Panc1 (cell line): ENCODE measurements at regions of chr11 and their contacts with region 1.

Region 1: GRCh38 chr11:68617925-68618809 is 66.2 kb upstream of the GAL start:
- DNase-seq: no peak
- ATAC-seq: peak; percentile 43; the same call in 1 of the 2 replicates
- H3K4me3 ChIP-seq: no peak overlapping the region
- H3K27ac ChIP-seq: no peak overlapping the region
- H3K4me1 ChIP-seq: no peaks in the 10 kb centered on the region
- H3K27me3 ChIP-seq: no peaks in the 10 kb centered on the region
- CTCF ChIP-seq: no peak

Region 2: DNA sequence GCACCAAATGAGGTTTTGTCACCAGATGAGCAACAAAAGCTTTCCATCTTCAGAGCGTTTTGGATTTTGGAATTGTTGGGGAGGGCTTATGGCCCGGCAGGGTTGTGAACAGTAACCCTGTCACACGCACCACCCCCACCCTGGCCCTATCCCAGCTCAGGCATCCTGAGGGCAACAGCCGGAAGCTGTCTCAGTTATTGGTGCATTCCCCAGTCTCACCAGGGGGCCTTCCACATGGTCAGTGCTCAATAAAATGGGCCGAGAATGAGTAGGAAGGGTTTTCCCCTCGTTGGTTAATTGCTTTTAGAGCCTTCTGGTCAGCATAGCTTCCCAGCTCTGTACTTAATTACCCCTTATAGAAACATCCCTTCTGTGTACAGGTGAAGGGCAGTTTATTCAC is 259.8 kb before region 1 on chr11:
- CTCF ChIA-PET with region 1: interaction called, 12 read pairs
- POLR2A ChIA-PET with region 1: no interaction called
- in situ Hi-C with region 1: no loop called
- intact Hi-C with region 1: no loop called
- DNase-seq: no peak
- ATAC-seq: no peak
- H3K4me3 ChIP-seq: no peak overlapping the region
- H3K27ac ChIP-seq: no peak overlapping the region
- H3K4me1 ChIP-seq: peaks cover 25% of the 10 kb centered on the region
- H3K27me3 ChIP-seq: no peaks in the 10 kb centered on the region
- CTCF ChIP-seq: no peak